MCF 10A (cell line): ENCODE measurements at regions of chr5 and their contacts with region 1.

Region 1: DNA sequence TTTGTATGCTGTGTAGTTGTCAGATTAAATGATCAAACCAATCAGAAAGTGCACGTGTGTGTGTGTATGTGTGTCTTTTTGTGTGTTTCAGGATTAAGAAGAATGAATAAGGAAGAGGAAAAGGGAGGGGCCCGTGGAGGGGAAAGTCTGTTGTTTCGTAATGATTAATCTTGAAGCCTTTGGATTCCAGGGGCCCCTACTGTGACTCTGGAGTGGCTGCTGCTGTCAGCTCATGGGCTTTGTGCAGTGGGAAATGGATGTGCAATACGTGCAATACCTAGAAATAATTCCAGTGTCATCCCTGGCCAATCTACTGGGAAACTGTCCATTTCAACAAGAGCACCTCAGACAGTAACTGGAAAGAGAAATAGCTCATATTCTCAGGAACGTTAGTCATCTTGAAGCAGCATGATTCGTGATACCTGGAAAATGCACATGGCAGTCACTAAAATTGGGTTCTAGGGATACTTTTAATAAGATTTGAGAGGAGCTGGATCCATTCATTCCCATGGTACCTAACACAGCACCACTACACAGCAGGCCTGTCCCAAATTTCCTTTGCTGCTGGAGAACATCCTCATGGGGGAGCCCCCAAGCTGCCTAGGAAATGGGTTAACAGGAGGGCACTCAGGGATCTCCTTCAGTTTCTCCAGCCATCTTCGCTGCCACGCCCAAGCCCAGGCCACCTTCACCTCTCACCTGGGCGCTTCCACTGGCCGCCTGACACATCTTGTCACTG is 186.3 kb downstream of the NR3C1 start:
- DNase-seq: peak; percentile 60
- H3K4me3 Mint-ChIP-seq: no peak overlapping the region
- H3K27ac Mint-ChIP-seq: peak overlapping the region; percentile 75
- H3K4me1 Mint-ChIP-seq: peaks cover 29% of the 10 kb centered on the region
- H3K27me3 Mint-ChIP-seq: no peaks in the 10 kb centered on the region
- CTCF ChIP-seq: no peak

Region 2: GRCh38 chr5:143235423-143235822 is 18.2 kb after region 1 on chr5:
- CTCF ChIA-PET with region 1: interaction called, 6 read pairs
- POLR2A ChIA-PET with region 1: interaction called, 13 read pairs
- intact Hi-C with region 1: no loop called
- DNase-seq: peak; percentile 61
- H3K4me3 Mint-ChIP-seq: no peak overlapping the region
- H3K27ac Mint-ChIP-seq: no peak overlapping the region
- H3K4me1 Mint-ChIP-seq: peaks cover 14% of the 10 kb centered on the region
- H3K27me3 Mint-ChIP-seq: no peaks in the 10 kb centered on the region
- CTCF ChIP-seq: no peak

Region 3: GRCh38 chr5:143279698-143280097 is 62.5 kb after region 1 on chr5:
- CTCF ChIA-PET with region 1: no interaction called
- POLR2A ChIA-PET with region 1: no interaction called
- intact Hi-C with region 1: no loop called
- DNase-seq: peak; percentile 20
- H3K4me3 Mint-ChIP-seq: no peak overlapping the region
- H3K27ac Mint-ChIP-seq: peak overlapping the region; percentile 20
- H3K4me1 Mint-ChIP-seq: peaks cover 4% of the 10 kb centered on the region
- H3K27me3 Mint-ChIP-seq: no peaks in the 10 kb centered on the region
- CTCF ChIP-seq: no peak

Region 4: GRCh38 chr5:143376911-143377813 is 159.9 kb after region 1 on chr5:
- CTCF ChIA-PET with region 1: no interaction called
- POLR2A ChIA-PET with region 1: no interaction called
- intact Hi-C with region 1: no loop called
- DNase-seq: peak; percentile 72
- H3K4me3 Mint-ChIP-seq: no peak overlapping the region
- H3K27ac Mint-ChIP-seq: peak overlapping the region; percentile 20
- H3K4me1 Mint-ChIP-seq: peaks cover 31% of the 10 kb centered on the region
- H3K27me3 Mint-ChIP-seq: no peaks in the 10 kb centered on the region
- CTCF ChIP-seq: no peak

Region 5: GRCh38 chr5:144135113-144135762 is 918.0 kb after region 1 on chr5:
- CTCF ChIA-PET with region 1: no interaction called
- POLR2A ChIA-PET with region 1: no interaction called
- intact Hi-C with region 1: no loop called
- DNase-seq: no peak
- H3K4me3 Mint-ChIP-seq: no peak overlapping the region
- H3K27ac Mint-ChIP-seq: no peak overlapping the region
- H3K4me1 Mint-ChIP-seq: no peaks in the 10 kb centered on the region
- H3K27me3 Mint-ChIP-seq: no peaks in the 10 kb centered on the region
- CTCF ChIP-seq: no peak